ENCODE measurements at regions of chr7 and their contacts with region 1.

Region 1: DNA sequence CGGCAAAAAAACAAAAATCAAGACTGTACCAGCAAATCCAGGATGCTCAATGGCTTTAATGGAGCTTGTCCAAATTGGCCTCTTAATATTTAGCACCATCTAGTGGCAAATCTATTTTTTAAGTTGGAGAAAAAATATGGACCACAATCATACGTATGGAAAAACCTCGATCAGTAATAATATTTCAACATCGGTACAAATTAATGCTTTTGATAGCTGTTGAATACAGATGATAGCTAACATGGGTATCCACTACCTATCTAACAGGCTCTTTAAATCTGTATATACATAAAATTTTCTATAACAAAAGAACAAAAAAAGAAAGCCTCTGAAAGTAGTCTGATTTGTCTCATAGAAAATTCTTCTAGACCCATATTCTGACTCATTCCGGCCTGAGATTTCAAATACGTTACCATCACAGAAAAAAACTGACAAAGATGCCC is 29.2 kb downstream of the COA1 start:
- DNase-seq: peak in 7 of 9 donors; percentile 38 to 73 (median 67)
- ATAC-seq: peak; percentile 89
- H3K4me3 ChIP-seq: no peak overlapping the region
- H3K4me3 Mint-ChIP-seq: peak overlapping the region in 9 of 10 donors; percentile 3 to 75 (median 64)
- H3K27ac ChIP-seq: peak overlapping the region; percentile 32
- H3K27ac Mint-ChIP-seq: peak overlapping the region in 8 of 9 donors; percentile 49 to 81 (median 70)
- H3K4me1 ChIP-seq: peaks cover 12 to 30% of the 10 kb centered on the region in 2 donors
- H3K4me1 Mint-ChIP-seq: peaks cover 23 to 56% (median 44%) of the 10 kb centered on the region in 7 donors
- H3K27me3 ChIP-seq: no peaks in the 10 kb centered on the region
- H3K27me3 Mint-ChIP-seq: no peaks in the 10 kb centered on the region

Region 2: DNA sequence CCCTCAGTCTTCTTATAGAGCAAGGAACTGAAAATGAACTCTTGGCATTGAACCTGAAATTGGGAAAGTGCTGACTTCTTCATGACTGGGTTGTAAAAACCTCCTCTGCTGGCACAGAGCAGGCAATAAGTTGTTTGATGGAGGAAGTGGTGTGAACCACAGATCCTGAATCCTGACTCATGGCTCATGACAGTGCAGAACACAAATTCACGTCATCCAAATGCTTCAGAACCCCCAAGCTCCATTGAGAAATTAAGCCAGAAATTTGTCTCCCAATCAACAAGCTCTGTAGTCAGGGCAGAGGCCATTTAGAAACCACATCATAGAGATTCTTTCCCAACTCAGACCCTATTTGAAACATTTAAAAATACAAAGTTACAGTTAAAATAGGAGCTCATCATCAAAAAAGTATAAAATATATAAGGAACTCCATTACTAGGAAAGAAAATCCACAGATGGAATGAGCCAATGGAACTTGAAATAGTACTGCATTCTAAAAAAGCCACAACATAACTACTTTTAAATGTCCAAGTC is 127.5 kb before region 1 on chr7:
- CTCF ChIA-PET with region 1: interaction called, 19 read pairs
- POLR2A ChIA-PET with region 1: interaction called, 3 read pairs
- intact Hi-C with region 1: no loop called
- DNase-seq: peak in 1 of 9 donors; percentile 34
- ATAC-seq: peak; percentile 95
- H3K4me3 ChIP-seq: no peak overlapping the region
- H3K4me3 Mint-ChIP-seq: peak overlapping the region in 1 of 10 donors; percentile 45
- H3K27ac ChIP-seq: no peak overlapping the region
- H3K27ac Mint-ChIP-seq: peak overlapping the region in 1 of 9 donors; percentile 58
- H3K4me1 ChIP-seq: no peaks in the 10 kb centered on the region
- H3K4me1 Mint-ChIP-seq: peaks cover 0 to 31% (median 5%) of the 10 kb centered on the region in 7 donors
- H3K27me3 ChIP-seq: no peaks in the 10 kb centered on the region
- H3K27me3 Mint-ChIP-seq: peaks cover 0 to 4% (median 0%) of the 10 kb centered on the region in 5 donors

Region 3: GRCh38 chr7:43625453-43625852 is 74.6 kb before region 1 on chr7:
- CTCF ChIA-PET with region 1: interaction called, 35 read pairs
- POLR2A ChIA-PET with region 1: interaction called, 13 read pairs
- intact Hi-C with region 1: loop called in 1 of 2 experiments (anchors 1 kb)
- DNase-seq: peak in 7 of 9 donors; percentile 56 to 75 (median 68)
- ATAC-seq: peak; percentile 89
- H3K4me3 ChIP-seq: no peak overlapping the region
- H3K4me3 Mint-ChIP-seq: peak overlapping the region in 9 of 10 donors; percentile 54 to 90 (median 76)
- H3K27ac ChIP-seq: peak overlapping the region; percentile 63
- H3K27ac Mint-ChIP-seq: peak overlapping the region in 7 of 9 donors; percentile 71 to 97 (median 90)
- H3K4me1 ChIP-seq: peaks cover 65 to 76% of the 10 kb centered on the region in 2 donors
- H3K4me1 Mint-ChIP-seq: peaks cover 3 to 96% (median 76%) of the 10 kb centered on the region in 7 donors
- H3K27me3 ChIP-seq: no peaks in the 10 kb centered on the region
- H3K27me3 Mint-ChIP-seq: no peaks in the 10 kb centered on the region

Region 4: DNA sequence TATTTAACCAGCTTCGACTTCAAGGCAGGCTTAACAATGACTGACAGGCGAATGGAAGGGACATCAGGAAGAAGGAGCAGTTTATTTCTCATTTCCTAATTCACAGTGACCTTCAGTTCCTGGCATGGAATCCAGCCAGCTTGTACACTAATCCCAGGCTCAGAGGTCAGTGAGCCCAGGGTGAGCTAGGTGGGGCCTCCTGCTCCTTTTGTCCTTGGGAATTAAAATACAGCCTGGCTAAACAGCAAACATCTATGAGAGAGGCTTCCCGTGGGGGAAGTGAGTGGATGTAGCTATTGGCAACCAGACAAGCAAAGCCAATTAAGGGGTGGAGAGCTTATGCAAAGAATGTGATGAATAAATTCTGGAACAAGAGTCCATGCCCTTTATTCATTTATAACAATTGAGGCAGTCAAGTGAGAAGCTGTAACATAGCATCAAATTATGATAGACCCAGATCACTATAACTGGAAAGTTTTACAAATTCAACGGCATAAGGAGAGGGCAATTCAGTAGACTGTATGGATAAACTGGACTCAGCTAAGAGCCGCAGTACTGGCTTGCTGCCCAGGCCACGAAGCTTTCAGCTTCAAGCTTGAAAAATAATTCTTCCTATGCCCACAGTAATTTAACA is 60.1 kb before region 1 on chr7:
- CTCF ChIA-PET with region 1: interaction called, 5 read pairs
- POLR2A ChIA-PET with region 1: interaction called, 11 read pairs
- intact Hi-C with region 1: loop called in 1 of 2 experiments (anchors 1 kb)
- DNase-seq: no peak
- ATAC-seq: no peak
- H3K4me3 ChIP-seq: no peak overlapping the region
- H3K4me3 Mint-ChIP-seq: peak overlapping the region in 9 of 10 donors; percentile 4 to 58 (median 39)
- H3K27ac ChIP-seq: peak overlapping the region; percentile 59
- H3K27ac Mint-ChIP-seq: peak overlapping the region in 7 of 9 donors; percentile 90 to 100 (median 93)
- H3K4me1 ChIP-seq: peaks cover 69 to 86% of the 10 kb centered on the region in 2 donors
- H3K4me1 Mint-ChIP-seq: peaks cover 48 to 100% (median 96%) of the 10 kb centered on the region in 7 donors
- H3K27me3 ChIP-seq: no peaks in the 10 kb centered on the region
- H3K27me3 Mint-ChIP-seq: no peaks in the 10 kb centered on the region

Region 5: DNA sequence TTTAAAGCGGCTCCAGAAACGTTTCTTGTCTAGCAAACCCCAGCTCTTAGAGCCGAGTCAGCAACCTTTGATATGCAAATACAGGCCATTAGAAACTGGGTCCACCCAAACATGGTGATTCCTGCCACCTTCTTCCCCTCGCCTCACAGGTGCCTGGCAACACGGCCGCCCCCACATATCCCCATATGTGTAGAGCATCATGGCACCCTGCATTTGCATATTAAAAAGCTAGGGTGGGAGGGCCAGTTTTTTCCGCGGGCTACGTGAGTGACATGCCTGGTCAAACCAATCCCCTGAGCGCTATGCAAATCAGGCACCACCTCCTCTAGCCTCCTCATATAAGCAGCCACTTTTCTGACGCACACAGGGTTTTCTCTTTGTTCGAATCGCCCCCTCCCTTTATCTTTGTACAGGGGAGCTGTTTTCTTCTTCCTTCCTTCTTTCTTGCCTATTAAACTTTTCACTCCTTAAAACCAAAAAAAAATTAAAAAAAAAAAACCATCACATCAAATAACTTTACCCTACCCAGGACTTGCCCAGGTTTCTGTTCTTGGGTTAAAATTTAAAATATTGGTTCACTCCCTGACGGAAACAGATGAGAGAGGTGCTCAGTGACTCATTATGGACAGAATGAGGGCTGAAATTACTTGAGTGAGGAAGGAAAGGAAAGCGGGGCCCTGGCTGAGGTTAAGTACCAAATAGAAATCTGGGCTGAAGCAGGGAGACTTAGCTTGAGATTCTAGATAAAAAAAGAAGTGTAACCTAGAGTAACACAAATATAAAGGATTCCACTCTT is 30.6 kb before region 1 on chr7:
- CTCF ChIA-PET with region 1: interaction called, 10 read pairs
- POLR2A ChIA-PET with region 1: interaction called, 4 read pairs
- intact Hi-C with region 1: no loop called
- DNase-seq: peak in 7 of 9 donors; percentile 30 to 56 (median 47)
- ATAC-seq: peak; percentile 86
- H3K4me3 ChIP-seq: no peak overlapping the region
- H3K4me3 Mint-ChIP-seq: peak overlapping the region; percentile 39 to 81 (median 66)
- H3K27ac ChIP-seq: peak overlapping the region; percentile 53
- H3K27ac Mint-ChIP-seq: peak overlapping the region; percentile 67 to 93 (median 88)
- H3K4me1 ChIP-seq: peaks cover 10 to 29% of the 10 kb centered on the region in 2 donors
- H3K4me1 Mint-ChIP-seq: peaks cover 39 to 95% (median 91%) of the 10 kb centered on the region in 7 donors
- H3K27me3 ChIP-seq: no peaks in the 10 kb centered on the region
- H3K27me3 Mint-ChIP-seq: no peaks in the 10 kb centered on the region

Region 6: GRCh38 chr7:43721193-43721806 is 21.2 kb after region 1 on chr7:
- CTCF ChIA-PET with region 1: interaction called, 19 read pairs
- POLR2A ChIA-PET with region 1: interaction called, 4 read pairs
- intact Hi-C with region 1: loop called in 1 of 2 experiments (anchors 1 kb)
- DNase-seq: peak in 7 of 9 donors; percentile 44 to 65 (median 54)
- ATAC-seq: peak; percentile 61
- H3K4me3 ChIP-seq: no peak overlapping the region
- H3K4me3 Mint-ChIP-seq: no peak overlapping the region
- H3K27ac ChIP-seq: no peak overlapping the region
- H3K27ac Mint-ChIP-seq: peak overlapping the region in 3 of 9 donors; percentile 18 to 79 (median 77)
- H3K4me1 ChIP-seq: peaks cover 0 to 4% of the 10 kb centered on the region in 2 donors
- H3K4me1 Mint-ChIP-seq: peaks cover 22 to 73% (median 57%) of the 10 kb centered on the region in 7 donors
- H3K27me3 ChIP-seq: no peaks in the 10 kb centered on the region
- H3K27me3 Mint-ChIP-seq: no peaks in the 10 kb centered on the region